ENCODE measurements at regions of chr20 and their contacts with region 1.

Region 1: GRCh38 chr20:10306440-10307358 is 88.1 kb downstream of the SNAP25 start:
- DNase-seq: no peak
- ATAC-seq: no peak
- H3K4me3 ChIP-seq: no peak overlapping the region
- H3K27ac ChIP-seq: no peak overlapping the region
- H3K4me1 ChIP-seq: peaks cover 0 to 13% (median 0%) of the 10 kb centered on the region in 12 donors
- H3K27me3 ChIP-seq: peaks cover 0 to 20% (median 0%) of the 10 kb centered on the region in 9 donors
- CTCF ChIP-seq: no peak
- POLR2A ChIP-seq: no peak

Region 2: GRCh38 chr20:10357974-10358373 is 51.3 kb after region 1 on chr20:
- intact Hi-C with region 1: loop called in 1 of 10 experiments (anchors 5 kb)
- DNase-seq: no peak
- ATAC-seq: no peak
- H3K4me3 ChIP-seq: no peak overlapping the region
- H3K27ac ChIP-seq: no peak overlapping the region
- H3K4me1 ChIP-seq: peaks cover 0 to 14% (median 0%) of the 10 kb centered on the region in 12 donors
- H3K27me3 ChIP-seq: no peaks in the 10 kb centered on the region
- CTCF ChIP-seq: peak in 9 of 12 donors; percentile 16 to 42 (median 36)
- POLR2A ChIP-seq: no peak

Region 3: GRCh38 chr20:11608736-11609135 is 1302.0 kb after region 1 on chr20:
- intact Hi-C with region 1: no loop called
- DNase-seq: peak in 1 of 5 donors; percentile 32
- ATAC-seq: no peak
- H3K4me3 ChIP-seq: no peak overlapping the region
- H3K27ac ChIP-seq: no peak overlapping the region
- H3K4me1 ChIP-seq: no peaks in the 10 kb centered on the region
- H3K27me3 ChIP-seq: peaks cover 0 to 7% (median 0%) of the 10 kb centered on the region in 9 donors
- CTCF ChIP-seq: no peak
- POLR2A ChIP-seq: no peak

Measured in heart left ventricle (tissue), 16 donors.